ENCODE measurements at regions of chr5 and their contacts with region 1.

Region 1: DNA sequence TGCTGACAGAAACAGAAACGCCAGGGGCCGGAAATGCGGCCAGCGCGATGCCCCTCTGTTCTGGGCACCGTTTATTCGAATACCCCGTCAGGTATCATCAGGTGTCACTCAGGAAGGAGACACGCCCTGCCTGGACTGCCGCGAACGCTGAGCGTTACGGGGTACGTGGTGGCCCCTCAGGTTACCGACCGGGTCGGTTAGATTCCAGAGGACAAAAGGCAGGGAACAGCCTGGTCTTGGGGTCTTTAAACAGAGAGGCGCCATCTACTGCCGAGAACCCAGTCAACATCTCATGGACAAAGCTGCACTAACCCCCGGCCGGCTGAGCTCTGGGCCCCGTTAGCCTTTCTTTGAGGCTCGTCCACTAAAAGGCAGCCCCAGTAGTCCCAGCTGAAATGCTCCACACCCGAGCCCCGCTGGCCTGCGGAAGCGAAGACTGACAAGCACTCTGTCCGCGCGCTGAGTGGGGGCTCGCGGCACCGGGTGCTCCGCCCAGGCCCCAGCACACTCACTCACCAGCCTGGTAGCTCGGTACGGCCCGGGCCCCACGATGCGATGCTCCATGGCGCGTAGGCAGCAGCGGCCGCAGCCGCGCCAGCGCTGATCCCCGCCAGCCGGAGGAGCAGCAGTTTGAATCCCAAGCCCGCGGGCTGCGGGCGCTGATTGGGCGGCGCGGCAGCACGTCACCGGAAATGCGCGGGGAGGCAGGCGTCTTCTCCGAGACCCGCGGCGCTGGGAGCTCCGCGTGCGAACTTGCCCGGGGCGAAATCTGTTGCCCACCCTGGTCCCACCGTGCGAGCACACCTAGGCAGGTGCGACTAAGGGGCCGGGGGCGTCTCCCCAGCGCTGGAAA is at the start of gene DEPDC1B:
- DNase-seq: peak; percentile 61
- ATAC-seq: peak; percentile 98
- H3K4me3 ChIP-seq: peak within 1 kb of the TSS; percentile 89 to 95
- H3K27ac ChIP-seq: peak within 1 kb of the TSS; percentile 94
- H3K4me1 ChIP-seq: peaks cover 23% of the 10 kb centered on the region
- H3K27me3 ChIP-seq: no peaks in the 10 kb centered on the region
- CTCF ChIP-seq: peak; percentile 64
- total RNA-seq, gene DEPDC1B: 22.2 TPM

Region 2: DNA sequence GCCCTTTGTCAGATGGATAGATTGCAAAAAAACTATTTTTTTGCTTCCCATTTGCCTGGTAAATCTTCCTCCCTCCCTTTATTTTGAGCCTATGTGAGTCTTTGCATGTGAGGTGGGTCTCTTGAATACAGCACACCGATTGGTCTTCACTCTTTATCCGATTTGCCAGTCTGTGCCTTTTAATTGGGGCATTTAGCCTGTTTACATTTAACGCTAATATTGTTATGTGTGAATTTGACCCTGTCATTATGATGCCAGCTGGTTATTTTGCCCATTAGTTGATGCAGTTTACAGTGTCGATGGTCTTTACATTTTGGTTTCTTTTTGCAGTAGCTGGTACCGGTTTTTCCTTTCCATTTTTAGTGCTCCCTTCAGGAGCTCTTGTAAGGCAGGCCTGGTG is 13.2 kb after region 1 on chr5:
- CTCF ChIA-PET with region 1: interaction called, 3 read pairs
- POLR2A ChIA-PET with region 1: interaction called, 16 read pairs
- in situ Hi-C with region 1: no loop called
- intact Hi-C with region 1: no loop called
- DNase-seq: no peak
- ATAC-seq: no peak
- H3K4me3 ChIP-seq: no peak overlapping the region
- H3K27ac ChIP-seq: no peak overlapping the region
- H3K4me1 ChIP-seq: no peaks in the 10 kb centered on the region
- H3K27me3 ChIP-seq: no peaks in the 10 kb centered on the region; the same call in 1 of the 2 replicates
- CTCF ChIP-seq: no peak

Region 3: DNA sequence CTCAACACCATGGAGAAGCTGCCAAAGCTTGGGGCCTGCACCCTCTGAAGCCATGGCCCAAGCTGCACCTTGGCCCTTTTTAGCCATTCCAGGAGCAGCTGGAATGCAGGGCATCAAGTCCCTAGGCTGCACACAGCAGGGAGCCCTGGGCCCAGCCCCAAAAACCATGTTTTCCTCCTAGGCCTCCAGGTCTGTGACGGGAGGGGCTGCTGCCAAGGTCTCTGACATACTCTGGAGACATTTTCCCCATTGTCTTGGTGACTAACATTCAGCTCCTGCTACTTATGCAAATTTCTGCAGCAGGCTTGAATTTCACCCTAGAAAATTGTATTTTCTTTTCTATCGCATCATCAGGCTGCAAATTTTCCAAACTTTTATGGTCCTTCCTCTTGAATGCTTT is 79.7 kb after region 1 on chr5:
- CTCF ChIA-PET with region 1: no interaction called
- POLR2A ChIA-PET with region 1: no interaction called
- in situ Hi-C with region 1: no loop called
- intact Hi-C with region 1: no loop called
- DNase-seq: no peak
- ATAC-seq: no peak
- H3K4me3 ChIP-seq: no peak overlapping the region
- H3K27ac ChIP-seq: no peak overlapping the region
- H3K4me1 ChIP-seq: no peaks in the 10 kb centered on the region
- H3K27me3 ChIP-seq: no peaks in the 10 kb centered on the region
- CTCF ChIP-seq: no peak

Region 4: DNA sequence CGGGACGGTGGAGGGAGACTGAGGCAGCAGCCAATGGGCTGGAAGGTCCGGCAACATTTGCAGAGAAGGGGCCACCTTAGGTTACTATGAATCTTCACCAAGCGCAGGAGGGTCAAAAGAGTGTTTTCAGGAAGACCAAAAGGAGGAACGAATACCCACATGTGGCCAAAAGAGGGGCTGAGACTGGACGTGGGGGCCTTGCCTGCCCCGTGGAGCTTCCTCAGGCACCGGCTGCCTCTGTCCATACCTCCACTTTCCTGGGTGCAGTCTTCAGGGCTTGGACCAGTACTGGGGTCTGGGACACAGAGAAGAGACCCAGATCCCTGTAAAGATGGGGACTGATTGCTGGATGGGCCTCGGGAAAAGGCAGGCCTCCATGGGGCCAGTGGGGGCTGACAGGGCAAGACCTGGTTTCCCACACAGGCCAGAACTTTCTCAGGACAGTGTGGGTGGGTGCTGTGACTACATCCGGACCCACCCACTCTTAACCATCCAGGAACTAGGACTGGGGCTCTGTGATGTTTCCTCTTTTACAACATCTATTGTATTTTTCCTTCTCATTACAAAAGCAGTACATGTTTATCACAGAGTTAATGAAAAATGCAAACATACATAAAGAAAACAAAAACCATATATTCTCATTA is 927.0 kb after region 1 on chr5:
- CTCF ChIA-PET with region 1: no interaction called
- POLR2A ChIA-PET with region 1: interaction called, 13 read pairs
- in situ Hi-C with region 1: no loop called
- intact Hi-C with region 1: no loop called
- DNase-seq: no peak
- ATAC-seq: no peak
- H3K4me3 ChIP-seq: no peak overlapping the region
- H3K27ac ChIP-seq: no peak overlapping the region
- H3K4me1 ChIP-seq: peaks cover 5% of the 10 kb centered on the region; the same call in 1 of the 2 replicates
- H3K27me3 ChIP-seq: no peaks in the 10 kb centered on the region
- CTCF ChIP-seq: no peak

Measured in Panc1 (cell line).